A549 (cell line): ENCODE measurements at regions of chr6 and their contacts with region 1.

Region 1: DNA sequence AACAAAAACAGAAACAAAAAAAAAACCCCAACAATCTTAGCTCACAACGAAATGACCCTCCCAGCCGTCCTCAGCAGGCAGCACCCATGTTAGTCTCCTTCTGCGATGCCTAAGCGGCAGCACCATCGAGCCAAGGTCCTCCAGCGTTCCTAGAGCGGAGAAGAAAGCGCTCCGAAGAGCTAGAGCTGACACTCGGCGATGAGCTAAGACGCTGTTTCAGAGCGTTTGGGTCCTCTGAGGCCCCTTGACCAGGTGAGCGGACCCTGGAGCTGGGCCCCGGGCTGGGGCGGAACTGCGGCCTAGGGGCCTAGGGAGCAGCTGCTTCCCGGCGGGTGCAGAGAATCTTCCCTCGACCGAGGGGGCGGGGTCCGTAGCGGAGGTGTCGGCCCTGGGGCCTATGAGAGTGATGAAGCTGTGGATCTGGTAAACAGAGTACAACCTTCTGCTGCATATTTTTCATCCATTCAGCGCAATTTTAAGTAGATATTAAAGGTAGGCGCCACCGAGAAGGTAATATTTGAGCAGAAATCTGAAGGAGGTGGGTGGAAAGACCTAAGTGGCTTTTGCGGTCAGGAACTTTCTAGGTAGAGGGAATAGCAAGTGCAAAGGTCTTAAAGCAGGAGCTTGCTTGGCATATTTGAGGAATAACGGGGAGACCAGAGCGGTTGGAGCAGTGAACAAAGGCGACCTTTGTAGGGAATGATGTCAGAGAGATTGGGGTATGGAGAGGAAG is at the start of gene ZSCAN26:
- DNase-seq: peak; percentile 67 to 91
- ATAC-seq: peak; percentile 99
- H3K4me3 ChIP-seq: peak within 1 kb of the TSS; percentile 68
- H3K27ac ChIP-seq: peak within 1 kb of the TSS; percentile 93 to 96
- H3K4me1 ChIP-seq: peaks cover 25% of the 10 kb centered on the region
- CTCF ChIP-seq: no peak
- EP300 ChIP-seq: no peak
- POLR2A ChIP-seq: peak; percentile 33
- RAD21 ChIP-seq: no peak
- polyA plus RNA-seq, gene ZSCAN26: 10.1 and 11.2 TPM in 2 replicates

Region 2: DNA sequence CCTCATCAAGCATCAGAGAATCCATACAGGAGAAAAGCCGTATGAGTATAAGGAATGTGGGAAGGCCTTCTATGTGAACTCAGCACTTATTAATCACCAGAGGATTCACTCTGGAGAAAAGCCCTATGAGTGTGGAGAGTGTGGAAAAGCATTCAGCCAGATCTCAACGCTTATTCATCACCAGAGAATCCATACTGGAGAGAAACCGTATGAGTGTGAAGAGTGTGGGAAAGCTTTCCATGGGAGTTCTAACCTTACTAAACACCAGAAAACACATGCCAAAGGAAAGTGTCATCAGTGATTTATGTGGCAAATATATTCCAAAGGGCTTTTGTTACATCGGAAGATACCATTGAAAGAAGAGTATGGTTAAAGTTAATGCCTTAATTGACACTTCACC is 100.1 kb before region 1 on chr6:
- CTCF ChIA-PET with region 1: no interaction called
- POLR2A ChIA-PET with region 1: no interaction called
- DNase-seq: no peak
- ATAC-seq: no peak
- H3K4me3 ChIP-seq: no peak overlapping the region
- H3K27ac ChIP-seq: no peak overlapping the region
- H3K4me1 ChIP-seq: no peaks in the 10 kb centered on the region
- CTCF ChIP-seq: no peak
- EP300 ChIP-seq: no peak
- POLR2A ChIP-seq: no peak
- RAD21 ChIP-seq: no peak

Region 3: GRCh38 chr6:28252009-28252975 is 14.8 kb before region 1 on chr6 and contains the start of gene ZKSCAN4:
- CTCF ChIA-PET with region 1: no interaction called
- POLR2A ChIA-PET with region 1: interaction called, 25 read pairs
- DNase-seq: peak; percentile 64 to 90
- ATAC-seq: peak; percentile 98
- H3K4me3 ChIP-seq: peak within 1 kb of the TSS; percentile 86
- H3K27ac ChIP-seq: peak within 1 kb of the TSS; percentile 75 to 91
- H3K4me1 ChIP-seq: peaks cover 5% of the 10 kb centered on the region; the same call in 1 of the 3 replicates
- CTCF ChIP-seq: no peak
- EP300 ChIP-seq: no peak
- POLR2A ChIP-seq: no peak
- RAD21 ChIP-seq: no peak
- polyA plus RNA-seq, gene ZKSCAN4: 2.3 TPM in 2 replicates

Region 4: DNA sequence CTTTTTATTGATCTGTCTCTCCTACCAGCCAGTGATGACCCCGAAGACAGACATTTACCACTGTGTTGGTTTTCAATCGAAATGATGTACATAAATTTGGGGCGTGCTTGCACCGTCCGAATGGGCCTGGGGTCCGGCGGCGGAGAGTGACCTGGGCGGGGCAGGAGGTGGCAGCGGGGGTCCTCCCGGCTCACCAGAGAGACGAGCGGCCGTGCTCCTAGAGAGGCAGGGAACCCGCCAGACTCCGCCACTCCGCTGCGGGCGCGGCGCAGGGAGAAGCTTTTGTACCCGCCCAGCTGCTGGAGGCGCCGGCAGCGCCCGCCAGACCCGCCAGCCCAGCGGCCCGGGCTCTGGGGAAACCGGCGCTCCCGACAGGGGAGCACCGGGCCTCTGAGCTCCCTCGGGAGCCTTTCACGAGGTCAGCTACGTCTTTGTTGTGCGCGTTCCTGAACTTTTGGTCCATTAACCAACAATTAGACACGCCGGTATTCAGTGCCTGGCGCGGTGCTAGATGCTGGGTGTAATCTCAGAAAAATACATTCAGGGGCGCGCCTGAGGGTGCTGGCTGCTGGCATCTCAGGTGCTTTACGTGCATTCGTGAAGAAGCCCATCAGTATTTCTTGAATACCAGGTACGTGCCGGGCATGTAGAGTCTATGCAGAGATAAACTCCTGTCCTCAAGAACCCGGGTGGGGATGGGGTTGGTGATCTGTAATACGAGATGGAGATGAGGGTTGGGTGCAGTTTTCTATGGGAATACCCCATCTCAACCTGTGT is 14.3 kb after region 1 on chr6 and contains the start of gene PGBD1:
- CTCF ChIA-PET with region 1: interaction called, 3 read pairs
- POLR2A ChIA-PET with region 1: interaction called, 13 read pairs
- DNase-seq: peak; percentile 36 to 83
- ATAC-seq: peak; percentile 96 to 99
- H3K4me3 ChIP-seq: peak within 1 kb of the TSS; percentile 88
- H3K27ac ChIP-seq: peak within 1 kb of the TSS; percentile 86 to 94
- H3K4me1 ChIP-seq: 0 out of 3 replicates have a peak, but pooled peaks cover 3% of the 10 kb centered on the region
- CTCF ChIP-seq: no peak
- EP300 ChIP-seq: no peak
- POLR2A ChIP-seq: peak; percentile 46
- RAD21 ChIP-seq: no peak
- polyA plus RNA-seq, gene PGBD1: 5.2 and 7.0 TPM in 2 replicates